ENCODE measurements at regions of chr16 and their contacts with region 1.

Region 1: GRCh38 chr16:85659805-85660495 is 28.8 kb downstream of the GINS2 start:
- DNase-seq: no peak
- ATAC-seq: peak; percentile 94
- H3K4me3 ChIP-seq: no peak overlapping the region
- H3K27ac ChIP-seq: no peak overlapping the region
- H3K4me1 ChIP-seq: no peaks in the 10 kb centered on the region
- H3K27me3 ChIP-seq: no peaks in the 10 kb centered on the region
- CTCF ChIP-seq: peak; percentile 87 to 96 (median 95)
- EP300 ChIP-seq: no peak
- POLR2A ChIP-seq: no peak; the same call in 1 of the 2 replicates
- RAD21 ChIP-seq: peak; percentile 80

Region 2: DNA sequence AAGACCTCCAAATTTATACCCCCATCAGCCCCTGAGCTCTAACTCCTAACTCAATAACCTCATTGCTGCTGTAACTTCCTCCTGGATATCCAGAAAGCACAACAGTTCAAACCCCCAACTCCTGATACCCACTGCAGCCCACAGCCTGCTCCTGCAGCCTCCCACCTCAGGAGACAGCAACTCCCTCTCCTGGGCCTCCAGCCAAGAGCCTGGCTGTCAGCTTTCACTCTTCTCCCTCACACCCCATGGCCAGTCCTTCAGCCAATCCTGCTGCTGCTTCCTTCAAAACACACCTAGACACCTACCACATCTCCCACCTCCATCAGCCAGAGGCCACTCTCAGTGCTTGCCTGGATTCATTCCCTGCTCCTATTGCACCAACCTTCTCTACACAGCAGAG is 23.4 kb after region 1 on chr16:
- CTCF ChIA-PET with region 1: interaction called, 18 read pairs
- POLR2A ChIA-PET with region 1: no interaction called
- RAD21 ChIA-PET with region 1: no interaction called
- SMC1A ChIA-PET with region 1: no interaction called
- in situ Hi-C with region 1: no loop called
- intact Hi-C with region 1: no loop called
- DNase-seq: no peak
- ATAC-seq: no peak
- H3K4me3 ChIP-seq: no peak overlapping the region
- H3K27ac ChIP-seq: no peak overlapping the region
- H3K4me1 ChIP-seq: peaks cover 28% of the 10 kb centered on the region
- H3K27me3 ChIP-seq: no peaks in the 10 kb centered on the region
- CTCF ChIP-seq: no peak
- EP300 ChIP-seq: no peak
- POLR2A ChIP-seq: no peak
- RAD21 ChIP-seq: no peak

Measured in GM12878 (cell line).